Right lobe of liver (tissue), 6 donors: ENCODE measurements at regions of chr3 and their contacts with region 1.

Region 1: DNA sequence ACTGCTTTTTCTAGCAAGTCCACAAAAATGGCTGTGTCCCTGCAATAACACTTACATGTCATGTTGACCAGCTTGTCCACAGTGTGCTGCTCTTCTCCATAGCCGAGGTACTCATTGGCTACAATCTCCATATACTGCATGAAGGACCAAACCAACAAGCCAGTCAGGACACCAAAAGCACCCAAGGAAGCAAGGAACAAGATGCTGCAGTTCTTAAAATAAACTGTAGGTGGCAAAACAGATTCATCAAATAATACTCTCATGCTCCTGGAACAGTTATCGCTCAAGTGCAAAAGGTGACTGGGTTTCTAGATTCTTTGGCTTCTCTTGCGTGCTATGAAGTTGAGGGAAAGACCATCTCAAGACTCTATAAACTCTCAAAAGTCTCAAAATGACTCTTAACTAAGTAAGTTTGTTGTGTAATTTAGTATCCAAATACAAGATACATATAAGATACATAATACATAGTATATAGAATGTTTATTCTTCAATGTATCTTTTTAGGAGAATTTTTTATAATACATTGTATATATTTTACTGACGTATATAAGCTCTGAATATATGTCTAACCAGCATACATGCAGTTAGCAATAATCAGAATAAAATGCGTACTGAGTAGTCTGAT is 57.0 kb downstream of the NEK10 start:
- DNase-seq: no peak
- ATAC-seq: peak; percentile 93 to 99 (median 96)
- H3K4me3 ChIP-seq: no peak overlapping the region
- H3K27ac ChIP-seq: no peak overlapping the region
- H3K4me1 ChIP-seq: peaks cover 0 to 4% (median 0%) of the 10 kb centered on the region in 4 donors
- H3K27me3 ChIP-seq: no peaks in the 10 kb centered on the region
- CTCF ChIP-seq: peak; percentile 70 to 94 (median 80)
- POLR2A ChIP-seq: no peak

Region 2: DNA sequence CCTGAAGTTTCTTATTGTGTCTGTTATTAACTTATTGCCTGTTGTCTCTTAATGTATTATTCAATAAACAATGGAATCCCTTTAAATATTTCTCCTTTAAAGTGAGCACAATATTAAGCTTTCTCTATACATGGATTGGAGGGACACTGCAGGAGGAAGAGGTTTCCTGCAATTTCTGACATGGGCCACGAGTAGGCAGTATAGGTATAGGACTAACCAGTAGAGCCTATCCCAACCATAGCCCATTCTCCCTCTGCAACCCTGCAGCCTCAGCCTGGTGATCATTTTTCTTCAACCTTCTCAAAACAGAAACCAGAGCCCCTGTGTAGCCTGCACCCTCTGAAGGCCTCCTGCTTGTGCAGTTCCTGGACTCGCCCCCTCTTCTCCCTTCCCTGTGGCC is 67.8 kb before region 1 on chr3:
- intact Hi-C with region 1: no loop called
- DNase-seq: no peak
- ATAC-seq: no peak
- H3K4me3 ChIP-seq: no peak overlapping the region
- H3K27ac ChIP-seq: no peak overlapping the region
- H3K4me1 ChIP-seq: no peaks in the 10 kb centered on the region
- H3K27me3 ChIP-seq: no peaks in the 10 kb centered on the region
- CTCF ChIP-seq: no peak
- POLR2A ChIP-seq: no peak

Region 3: GRCh38 chr3:27467545-27467944 is 155.4 kb after region 1 on chr3:
- intact Hi-C with region 1: loop called (anchors 10 kb)
- DNase-seq: no peak
- ATAC-seq: peak; percentile 90 to 98 (median 94)
- H3K4me3 ChIP-seq: no peak overlapping the region
- H3K27ac ChIP-seq: no peak overlapping the region
- H3K4me1 ChIP-seq: no peaks in the 10 kb centered on the region
- H3K27me3 ChIP-seq: no peaks in the 10 kb centered on the region
- CTCF ChIP-seq: peak; percentile 58 to 79 (median 69)
- POLR2A ChIP-seq: no peak

Region 4: GRCh38 chr3:27479806-27480543 is 167.8 kb after region 1 on chr3:
- intact Hi-C with region 1: loop called in 1 of 2 experiments (anchors 10 kb)
- DNase-seq: no peak
- ATAC-seq: no peak
- H3K4me3 ChIP-seq: no peak overlapping the region
- H3K27ac ChIP-seq: no peak overlapping the region
- H3K4me1 ChIP-seq: peaks cover 0 to 6% (median 0%) of the 10 kb centered on the region in 4 donors
- H3K27me3 ChIP-seq: no peaks in the 10 kb centered on the region
- CTCF ChIP-seq: no peak
- POLR2A ChIP-seq: no peak